ENCODE measurements at regions of chr22 and their contacts with region 1.

Region 1: DNA sequence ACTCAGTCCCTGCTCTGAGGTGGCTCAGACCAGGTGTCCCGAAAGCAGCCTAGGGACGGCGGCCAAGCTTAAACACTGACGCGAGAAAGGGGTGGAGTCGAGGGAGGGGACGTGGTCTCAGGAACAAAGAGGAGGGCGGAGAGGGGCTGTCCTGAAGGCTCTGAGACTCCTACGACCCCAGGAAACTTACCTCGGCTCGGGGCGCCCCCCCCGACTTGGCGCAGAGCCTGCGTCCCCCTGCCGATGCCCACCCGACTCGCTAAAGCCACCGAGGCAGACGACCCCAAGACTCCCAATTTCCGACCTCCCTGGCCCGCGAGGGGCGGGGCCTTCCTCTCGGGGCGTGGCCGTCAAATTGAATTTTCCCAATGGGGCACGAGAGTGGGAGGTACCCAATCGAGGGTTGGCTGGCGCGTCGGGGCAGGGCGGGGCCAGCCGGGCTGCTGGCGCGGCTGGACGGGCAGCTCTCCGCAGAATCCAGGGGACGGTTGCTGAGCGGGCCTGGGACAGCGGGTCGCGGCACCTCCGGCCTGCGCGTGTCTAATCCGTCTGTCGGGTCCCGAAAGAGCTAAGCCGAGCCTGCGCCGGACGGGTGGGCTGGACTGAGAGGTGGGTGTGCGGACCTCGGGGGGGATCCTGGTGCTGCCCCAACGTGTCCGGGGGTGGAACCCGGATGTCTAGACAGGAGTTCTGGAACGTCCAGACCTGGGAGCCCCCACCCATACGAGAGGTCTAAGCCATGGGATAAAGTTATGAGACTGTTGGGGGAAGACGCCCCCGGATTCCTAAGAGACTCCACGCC is at the start of gene SMTN:
- DNase-seq: peak; percentile 91
- H3K4me3 Mint-ChIP-seq: peak within 1 kb of the TSS; percentile 79
- H3K27ac Mint-ChIP-seq: peak within 1 kb of the TSS; percentile 18
- H3K4me1 Mint-ChIP-seq: peaks cover 32% of the 10 kb centered on the region
- H3K27me3 Mint-ChIP-seq: no peaks in the 10 kb centered on the region
- total RNA-seq, gene SMTN: 46.2 to 47.6 TPM

Region 2: DNA sequence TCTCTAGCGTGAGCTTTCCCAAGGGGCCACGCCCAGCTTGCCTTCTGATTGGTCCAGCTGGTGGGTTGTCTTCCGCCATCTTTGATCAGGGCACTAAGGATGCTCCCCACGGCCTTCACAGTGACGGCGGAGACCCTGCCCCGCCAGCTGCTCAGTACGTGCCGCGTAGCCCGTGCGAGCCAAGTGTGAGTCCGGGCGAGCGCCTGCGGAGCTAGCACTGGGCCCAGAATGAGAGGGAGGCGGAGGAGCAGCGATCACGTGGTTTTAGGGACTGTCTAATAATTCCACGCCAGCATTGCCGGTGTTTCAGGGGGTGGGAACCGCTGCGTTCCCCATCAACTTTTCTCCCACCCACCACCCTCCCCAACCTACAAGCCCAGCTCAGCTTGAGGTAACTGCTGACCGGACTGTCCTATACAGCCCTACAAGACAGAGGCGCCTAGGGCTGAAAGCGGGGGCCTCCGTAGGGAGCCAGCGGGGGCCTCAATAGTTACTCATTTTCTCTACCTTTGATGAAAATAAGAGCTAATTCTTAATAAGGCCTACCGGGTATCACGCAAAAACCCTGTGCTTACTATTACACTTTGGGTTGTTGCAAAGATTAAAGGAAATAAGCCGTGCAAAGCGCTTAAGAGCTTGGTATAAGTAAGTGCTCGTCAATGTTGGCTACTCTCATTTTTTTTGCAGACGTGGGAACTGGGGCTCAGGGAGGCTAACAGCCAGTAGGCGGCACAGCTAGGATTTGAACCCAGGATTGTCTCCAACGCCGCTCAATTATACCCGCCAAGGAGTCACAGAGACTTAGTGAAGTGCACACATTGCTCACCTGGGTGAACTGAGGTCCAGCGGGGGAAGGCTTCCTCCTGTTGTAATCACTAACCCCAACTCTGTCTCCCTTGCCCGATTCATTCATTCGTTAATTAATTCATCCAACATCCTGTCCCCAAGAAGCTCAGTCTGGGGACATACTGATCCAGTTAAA is 656.8 kb before region 1 on chr22:
- CTCF ChIA-PET with region 1: no interaction called
- intact Hi-C with region 1: no loop called
- DNase-seq: peak; percentile 99
- H3K4me3 Mint-ChIP-seq: peak overlapping the region; percentile 97
- H3K27ac Mint-ChIP-seq: peak overlapping the region; percentile 96
- H3K4me1 Mint-ChIP-seq: peaks cover 50% of the 10 kb centered on the region
- H3K27me3 Mint-ChIP-seq: no peaks in the 10 kb centered on the region

Region 3: DNA sequence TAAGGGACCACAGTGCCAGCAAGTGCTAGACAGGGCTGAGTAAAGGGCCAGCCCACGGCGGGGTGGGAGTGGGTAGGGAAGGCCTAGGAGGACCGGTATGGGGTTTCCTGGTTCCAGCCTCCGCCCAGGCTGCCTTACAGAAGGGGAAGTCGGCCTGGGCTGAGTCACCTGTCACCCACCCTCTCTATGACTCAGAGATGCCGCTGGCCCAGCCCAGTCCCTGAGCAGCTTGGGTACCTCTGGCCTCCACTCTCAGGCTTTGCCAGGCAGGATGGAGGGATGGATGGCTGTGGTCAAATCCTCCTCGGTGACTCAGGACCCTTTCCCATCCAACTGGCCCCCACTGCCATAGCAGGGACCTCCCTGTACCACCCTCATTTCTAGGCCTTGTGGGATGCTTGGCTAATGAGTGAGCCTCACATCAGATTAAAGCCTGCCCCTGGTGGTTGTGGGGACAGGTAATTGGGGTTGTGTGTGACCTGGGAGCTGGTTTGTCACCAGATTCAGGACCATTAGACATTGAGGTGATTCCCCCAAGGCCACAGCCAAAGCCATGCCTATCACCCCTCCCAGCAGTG is 431.5 kb before region 1 on chr22:
- CTCF ChIA-PET with region 1: no interaction called
- intact Hi-C with region 1: loop called (anchors 5 kb)
- DNase-seq: peak; percentile 95
- H3K4me3 Mint-ChIP-seq: no peak overlapping the region
- H3K27ac Mint-ChIP-seq: peak overlapping the region; percentile 75
- H3K4me1 Mint-ChIP-seq: peaks cover 28% of the 10 kb centered on the region
- H3K27me3 Mint-ChIP-seq: no peaks in the 10 kb centered on the region

Region 4: DNA sequence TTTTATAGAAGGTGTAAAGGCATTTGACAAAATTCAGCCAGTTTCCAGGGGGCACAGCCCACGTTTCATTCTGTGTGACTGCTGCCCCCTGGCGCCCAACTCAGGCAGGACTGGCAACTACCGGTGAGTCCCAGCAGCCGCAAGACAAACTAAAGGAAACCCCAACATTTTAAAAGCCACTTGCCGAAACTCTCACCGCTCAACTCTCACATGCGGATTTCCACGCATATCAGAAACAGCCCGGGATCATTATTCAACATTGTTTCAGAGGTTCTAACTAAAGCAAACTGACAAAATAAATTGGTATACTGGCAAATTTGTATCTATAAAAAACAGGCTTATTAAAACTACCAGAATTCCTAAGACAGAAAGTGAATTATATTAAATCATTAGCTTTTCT is 160.6 kb before region 1 on chr22:
- CTCF ChIA-PET with region 1: interaction called, 19 read pairs
- intact Hi-C with region 1: loop called (anchors 1 kb)
- DNase-seq: peak; percentile 90
- H3K4me3 Mint-ChIP-seq: peak overlapping the region; percentile 56
- H3K27ac Mint-ChIP-seq: no peak overlapping the region
- H3K4me1 Mint-ChIP-seq: peaks cover 7% of the 10 kb centered on the region
- H3K27me3 Mint-ChIP-seq: no peaks in the 10 kb centered on the region

Region 5: GRCh38 chr22:30947816-30948454 is 133.1 kb before region 1 on chr22:
- CTCF ChIA-PET with region 1: interaction called, 29 read pairs
- intact Hi-C with region 1: loop called (anchors 1 kb)
- DNase-seq: no peak
- H3K4me3 Mint-ChIP-seq: no peak overlapping the region
- H3K27ac Mint-ChIP-seq: no peak overlapping the region
- H3K4me1 Mint-ChIP-seq: peaks cover 60% of the 10 kb centered on the region
- H3K27me3 Mint-ChIP-seq: no peaks in the 10 kb centered on the region

Region 6: DNA sequence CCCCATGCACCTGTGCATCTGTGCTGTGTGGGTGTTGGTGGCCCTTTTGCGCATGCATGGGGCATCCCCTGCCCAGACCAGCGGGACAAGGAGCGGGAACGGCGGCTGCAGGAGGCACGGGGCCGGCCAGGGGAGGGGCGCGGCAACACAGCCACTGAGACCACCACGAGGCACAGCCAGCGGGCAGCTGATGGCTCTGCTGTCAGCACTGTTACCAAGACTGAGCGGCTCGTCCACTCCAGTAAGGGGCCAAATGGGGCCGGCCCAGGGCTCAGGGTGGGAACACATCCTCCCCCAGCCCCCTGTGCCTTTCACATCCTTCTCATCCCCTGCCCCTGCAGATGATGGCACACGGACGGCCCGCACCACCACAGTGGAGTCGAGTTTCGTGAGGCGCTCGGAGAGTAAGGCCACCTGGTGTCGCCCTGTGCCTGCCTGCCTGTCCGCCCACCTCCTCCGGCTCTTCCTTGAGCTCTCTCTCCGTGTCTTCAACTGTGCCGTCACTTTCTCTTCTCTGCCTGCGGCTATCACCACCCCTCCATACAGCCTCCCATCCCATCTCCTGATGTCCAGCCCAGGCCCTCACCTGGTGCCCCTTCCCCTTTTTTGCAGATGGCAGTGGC is 15.7 kb after region 1 on chr22:
- CTCF ChIA-PET with region 1: interaction called, 10 read pairs
- intact Hi-C with region 1: no loop called
- DNase-seq: no peak
- H3K4me3 Mint-ChIP-seq: no peak overlapping the region
- H3K27ac Mint-ChIP-seq: no peak overlapping the region
- H3K4me1 Mint-ChIP-seq: no peaks in the 10 kb centered on the region
- H3K27me3 Mint-ChIP-seq: no peaks in the 10 kb centered on the region

Region 7: GRCh38 chr22:31630331-31631329 is 549.6 kb after region 1 on chr22:
- CTCF ChIA-PET with region 1: no interaction called
- intact Hi-C with region 1: loop called (anchors 5 kb)
- DNase-seq: peak; percentile 91
- H3K4me3 Mint-ChIP-seq: peak overlapping the region; percentile 84
- H3K27ac Mint-ChIP-seq: peak overlapping the region; percentile 94
- H3K4me1 Mint-ChIP-seq: peaks cover 56% of the 10 kb centered on the region
- H3K27me3 Mint-ChIP-seq: no peaks in the 10 kb centered on the region

Measured in activated naive CD4-positive, alpha-beta T cell treated with anti-CD3 and anti-CD28 coated beads for 36 hours (primary cell).